ENCODE measurements at regions of chr4 and their contacts with region 1.

Region 1: GRCh38 chr4:136864580-136865185 is 667.6 kb downstream of the PCDH18 start:
- DNase-seq: peak; percentile 82
- H3K4me3 ChIP-seq: no peak overlapping the region
- H3K27ac ChIP-seq: no peak overlapping the region
- H3K4me1 ChIP-seq: peaks cover 7% of the 10 kb centered on the region
- H3K27me3 ChIP-seq: no peaks in the 10 kb centered on the region
- CTCF ChIP-seq: peak; percentile 47 to 56
- POLR2A ChIP-seq: no peak

Region 2: DNA sequence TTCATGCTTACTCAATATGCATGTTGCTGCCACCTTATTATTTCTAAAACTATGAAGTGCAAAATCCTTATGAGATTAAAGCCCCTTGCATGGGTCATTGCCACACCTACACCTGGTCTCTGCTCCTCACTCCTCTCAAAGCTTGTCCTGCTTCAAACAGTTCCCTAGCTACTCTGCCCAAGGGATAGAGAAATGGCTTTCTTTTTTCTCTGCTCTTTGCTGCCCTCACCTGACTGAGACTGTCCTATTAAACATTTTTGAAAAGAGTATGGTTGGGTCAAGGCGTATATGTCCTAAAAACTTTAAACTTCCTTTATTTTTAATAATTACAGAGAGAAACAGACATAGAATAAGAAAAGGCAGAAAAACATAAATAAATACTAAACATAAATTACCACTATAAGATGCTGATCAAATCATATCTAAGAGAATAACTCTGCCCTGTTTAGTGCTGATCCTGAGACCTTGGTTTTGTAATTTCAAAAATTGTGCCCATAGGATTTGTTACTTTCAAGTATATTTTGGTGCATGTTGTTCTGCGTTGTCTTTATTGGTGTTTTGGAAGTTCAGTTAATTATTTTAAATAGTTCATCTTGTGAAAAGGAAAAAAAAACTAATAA is 1958.2 kb before region 1 on chr4:
- CTCF ChIA-PET with region 1: interaction called, 12 read pairs
- POLR2A ChIA-PET with region 1: no interaction called
- dilution Hi-C with region 1: no loop called
- intact Hi-C with region 1: loop called (anchors 1 kb)
- DNase-seq: peak; percentile 40
- H3K4me3 ChIP-seq: no peak overlapping the region
- H3K27ac ChIP-seq: no peak overlapping the region
- H3K4me1 ChIP-seq: no peaks in the 10 kb centered on the region
- H3K27me3 ChIP-seq: no peaks in the 10 kb centered on the region
- CTCF ChIP-seq: peak in 1 of 2 donors; percentile 22
- POLR2A ChIP-seq: no peak

Region 3: DNA sequence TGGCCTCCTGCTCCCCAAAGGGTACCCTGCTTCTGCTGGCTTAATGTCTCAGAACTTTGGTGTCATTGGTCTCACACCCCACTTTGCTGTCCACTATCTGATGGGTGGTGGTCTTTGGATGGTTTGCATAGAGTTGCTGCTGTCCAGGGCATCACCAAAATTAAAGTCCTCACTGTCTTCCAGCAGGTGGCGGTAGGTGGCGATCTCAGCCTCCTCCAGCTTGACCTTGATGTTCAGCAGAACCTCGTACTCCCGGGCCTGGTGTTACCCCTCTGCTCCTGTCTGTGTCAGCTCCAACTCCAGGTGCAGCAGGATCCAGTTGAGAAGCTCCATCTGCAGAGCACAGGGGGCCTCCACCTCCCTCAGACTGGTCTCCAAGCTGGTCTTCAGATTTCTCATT is 1493.5 kb before region 1 on chr4:
- CTCF ChIA-PET with region 1: interaction called, 20 read pairs
- POLR2A ChIA-PET with region 1: no interaction called
- dilution Hi-C with region 1: no loop called
- intact Hi-C with region 1: loop called (anchors 10 kb)
- DNase-seq: no peak
- H3K4me3 ChIP-seq: no peak overlapping the region
- H3K27ac ChIP-seq: no peak overlapping the region
- H3K4me1 ChIP-seq: no peaks in the 10 kb centered on the region
- H3K27me3 ChIP-seq: no peaks in the 10 kb centered on the region
- CTCF ChIP-seq: peak in 1 of 2 donors; percentile 18
- POLR2A ChIP-seq: no peak

Region 4: DNA sequence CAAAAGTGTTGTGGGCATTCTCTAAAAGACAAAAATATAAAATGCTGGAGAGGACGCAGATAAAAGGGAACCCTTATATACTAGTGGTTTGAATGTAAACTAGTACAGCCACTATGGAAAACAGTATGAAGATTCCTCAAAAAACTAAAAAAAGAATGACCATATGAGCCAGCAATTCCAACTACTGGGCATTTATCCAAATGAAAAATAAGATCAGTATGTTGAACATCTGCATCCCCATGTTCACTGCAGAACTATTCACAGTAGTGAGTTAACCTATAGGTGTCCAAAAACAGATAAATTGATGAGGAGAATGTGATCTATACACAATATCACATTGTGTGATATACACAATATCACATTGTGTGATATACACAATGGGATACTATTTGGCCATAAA is 947.7 kb before region 1 on chr4:
- CTCF ChIA-PET with region 1: no interaction called
- POLR2A ChIA-PET with region 1: no interaction called
- dilution Hi-C with region 1: no loop called
- intact Hi-C with region 1: loop called (anchors 10 kb)
- DNase-seq: no peak
- H3K4me3 ChIP-seq: no peak overlapping the region
- H3K27ac ChIP-seq: no peak overlapping the region
- H3K4me1 ChIP-seq: no peaks in the 10 kb centered on the region
- H3K27me3 ChIP-seq: no peaks in the 10 kb centered on the region
- CTCF ChIP-seq: no peak
- POLR2A ChIP-seq: no peak

Region 5: DNA sequence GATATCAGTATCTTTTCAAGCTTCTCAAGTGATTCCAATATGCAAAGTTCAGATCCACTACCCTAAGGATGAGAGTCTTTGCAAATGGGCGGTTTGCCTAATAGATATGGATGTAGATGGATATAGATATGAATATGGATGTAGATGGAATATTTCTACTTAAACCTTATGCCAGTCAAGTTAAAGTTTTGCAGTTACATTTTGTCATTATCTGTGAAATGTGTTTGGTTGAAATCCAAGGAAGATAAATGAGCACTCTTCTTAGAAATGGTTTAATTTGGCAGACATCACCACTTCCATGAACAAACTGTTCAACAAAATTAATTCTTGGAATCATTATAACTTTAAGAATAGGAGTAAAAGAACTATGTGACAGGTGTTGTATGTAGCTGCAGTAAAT is 399.0 kb before region 1 on chr4:
- CTCF ChIA-PET with region 1: no interaction called
- POLR2A ChIA-PET with region 1: no interaction called
- dilution Hi-C with region 1: no loop called
- intact Hi-C with region 1: no loop called
- DNase-seq: no peak
- H3K4me3 ChIP-seq: no peak overlapping the region
- H3K27ac ChIP-seq: no peak overlapping the region
- H3K4me1 ChIP-seq: no peaks in the 10 kb centered on the region
- H3K27me3 ChIP-seq: no peaks in the 10 kb centered on the region
- CTCF ChIP-seq: no peak
- POLR2A ChIP-seq: no peak

Region 6: DNA sequence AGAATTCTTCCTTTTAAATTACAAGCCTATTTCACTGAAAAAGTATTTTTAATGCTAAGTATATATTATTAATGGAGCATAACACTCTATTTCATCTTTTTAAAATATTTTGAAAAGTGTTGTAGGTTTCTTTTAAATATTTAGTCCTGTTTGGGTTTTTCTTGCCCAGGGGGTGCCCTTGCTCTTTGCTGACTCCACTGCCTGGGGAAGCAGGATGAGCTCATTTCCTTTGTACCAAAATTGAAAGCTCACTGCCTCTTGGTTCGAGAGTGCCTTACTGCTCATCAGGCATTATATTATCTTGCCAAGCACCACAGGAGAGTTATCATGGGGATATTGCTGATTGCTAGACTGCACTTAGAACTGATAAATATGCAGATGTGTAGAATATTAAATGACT is 151.5 kb before region 1 on chr4:
- CTCF ChIA-PET with region 1: interaction called, 104 read pairs
- POLR2A ChIA-PET with region 1: interaction called, 3 read pairs
- dilution Hi-C with region 1: no loop called
- intact Hi-C with region 1: loop called (anchors 1 kb)
- DNase-seq: peak; percentile 58
- H3K4me3 ChIP-seq: no peak overlapping the region
- H3K27ac ChIP-seq: no peak overlapping the region
- H3K4me1 ChIP-seq: no peaks in the 10 kb centered on the region
- H3K27me3 ChIP-seq: no peaks in the 10 kb centered on the region
- CTCF ChIP-seq: no peak
- POLR2A ChIP-seq: no peak

Measured in endothelial cell of umbilical vein (primary cell).